ENCODE measurements at regions of chrX and their contacts with region 1.

Region 1: DNA sequence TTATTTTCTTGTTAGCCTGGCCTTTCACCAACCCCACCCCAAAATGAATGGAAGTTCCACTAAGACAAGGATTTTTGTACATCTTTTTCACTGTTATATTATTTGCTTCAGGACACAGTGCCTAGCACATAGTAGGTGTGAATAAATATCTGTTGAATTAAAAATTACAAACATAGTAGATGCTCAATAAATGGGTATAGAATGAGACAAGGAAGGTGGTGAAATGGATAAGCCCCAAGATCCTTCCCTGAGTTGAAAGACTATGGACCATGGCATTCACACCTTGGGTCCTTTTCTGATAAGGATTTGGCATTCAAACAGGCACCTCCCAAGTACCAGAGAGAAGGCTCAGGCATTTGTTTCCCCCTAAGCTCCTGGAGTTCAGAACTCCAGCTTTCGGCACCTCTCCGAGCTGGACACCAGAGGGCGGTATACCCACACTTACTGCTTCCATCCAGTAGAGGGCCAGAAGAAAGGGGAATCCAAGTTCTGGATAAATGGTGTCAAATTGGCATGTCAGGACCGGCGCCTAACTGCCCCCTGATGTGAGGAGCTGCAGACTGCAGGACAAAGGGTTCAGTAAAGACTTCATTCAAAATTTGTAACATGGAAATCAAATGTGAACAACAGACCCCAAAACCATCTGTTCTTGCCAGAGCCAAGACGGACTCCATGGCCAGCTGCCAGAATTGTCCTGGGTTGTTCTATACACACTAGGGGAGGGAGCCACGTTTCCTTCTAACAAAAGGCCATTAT is 193.0 kb downstream of the GPC3 start:
- DNase-seq: peak; percentile 83
- H3K4me3 Mint-ChIP-seq: peak overlapping the region; percentile 65
- H3K27ac Mint-ChIP-seq: no peak overlapping the region
- H3K4me1 Mint-ChIP-seq: no peaks in the 10 kb centered on the region
- H3K27me3 Mint-ChIP-seq: peaks cover 42% of the 10 kb centered on the region
- CTCF ChIP-seq: peak; percentile 99

Region 2: GRCh38 chrX:133813971-133814370 is 21.6 kb after region 1 on chrX:
- CTCF ChIA-PET with region 1: interaction called, 21 read pairs
- POLR2A ChIA-PET with region 1: no interaction called
- intact Hi-C with region 1: no loop called
- DNase-seq: no peak
- H3K4me3 Mint-ChIP-seq: no peak overlapping the region
- H3K27ac Mint-ChIP-seq: no peak overlapping the region
- H3K4me1 Mint-ChIP-seq: no peaks in the 10 kb centered on the region
- H3K27me3 Mint-ChIP-seq: peaks cover 65% of the 10 kb centered on the region
- CTCF ChIP-seq: no peak

Region 3: DNA sequence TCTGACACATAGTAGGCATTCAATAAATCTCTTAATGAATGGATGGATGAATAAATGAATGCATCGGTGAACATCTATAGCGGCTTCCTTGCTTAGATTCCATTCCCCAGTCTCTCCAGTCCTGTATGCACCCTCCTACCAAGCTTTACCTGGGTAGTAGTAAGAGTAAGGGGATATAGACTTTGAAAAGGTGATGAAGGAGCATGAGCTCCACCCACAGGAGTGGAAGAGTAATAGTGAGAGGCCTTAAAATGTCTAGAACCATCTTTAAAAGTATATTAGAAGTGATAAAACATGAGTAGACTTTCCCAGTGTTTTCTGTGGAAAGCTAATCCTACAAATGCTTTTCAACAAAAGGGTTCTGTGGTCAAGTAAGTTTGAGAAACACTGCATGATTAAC is 228.5 kb after region 1 on chrX:
- CTCF ChIA-PET with region 1: interaction called, 65 read pairs
- POLR2A ChIA-PET with region 1: no interaction called
- intact Hi-C with region 1: loop called (anchors 1 kb)
- DNase-seq: peak; percentile 24
- H3K4me3 Mint-ChIP-seq: no peak overlapping the region
- H3K27ac Mint-ChIP-seq: no peak overlapping the region
- H3K4me1 Mint-ChIP-seq: no peaks in the 10 kb centered on the region
- H3K27me3 Mint-ChIP-seq: peaks cover 20% of the 10 kb centered on the region
- CTCF ChIP-seq: peak; percentile 19

Region 4: DNA sequence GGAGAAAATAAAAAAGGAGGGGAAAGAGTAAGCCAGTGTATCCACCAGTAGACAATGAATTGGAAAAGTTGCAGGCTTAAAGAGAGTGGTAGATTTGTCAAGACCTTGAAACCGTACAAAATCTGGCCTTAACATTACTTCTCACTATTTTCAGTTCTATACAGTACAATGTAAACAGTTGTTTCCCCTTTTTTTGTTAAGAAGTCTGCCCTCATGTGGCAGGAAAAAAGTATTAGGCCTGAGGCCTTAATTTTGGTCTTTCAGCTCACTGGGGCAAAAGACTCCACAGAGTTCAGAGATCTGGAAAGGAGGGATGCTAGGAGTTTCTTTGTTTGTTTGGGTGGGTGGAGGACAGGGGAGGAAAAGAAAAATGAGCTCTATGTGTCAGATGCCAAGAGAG is 351.9 kb after region 1 on chrX:
- CTCF ChIA-PET with region 1: interaction called, 51 read pairs
- POLR2A ChIA-PET with region 1: interaction called, 3 read pairs
- intact Hi-C with region 1: loop called (anchors 1 kb)
- DNase-seq: peak; percentile 36
- H3K4me3 Mint-ChIP-seq: no peak overlapping the region
- H3K27ac Mint-ChIP-seq: no peak overlapping the region
- H3K4me1 Mint-ChIP-seq: no peaks in the 10 kb centered on the region
- H3K27me3 Mint-ChIP-seq: peaks cover 34% of the 10 kb centered on the region
- CTCF ChIP-seq: peak; percentile 38

Region 5: GRCh38 chrX:134396174-134396573 is 603.8 kb after region 1 on chrX:
- CTCF ChIA-PET with region 1: interaction called, 22 read pairs
- POLR2A ChIA-PET with region 1: no interaction called
- intact Hi-C with region 1: loop called (anchors 1 kb)
- DNase-seq: peak; percentile 43
- H3K4me3 Mint-ChIP-seq: no peak overlapping the region
- H3K27ac Mint-ChIP-seq: no peak overlapping the region
- H3K4me1 Mint-ChIP-seq: no peaks in the 10 kb centered on the region
- H3K27me3 Mint-ChIP-seq: peaks cover 32% of the 10 kb centered on the region
- CTCF ChIP-seq: peak; percentile 66